A673 (cell line): ENCODE measurements at regions of chr2 and their contacts with region 1.

Region 1: GRCh38 chr2:54704688-54705605 is 18.5 kb upstream of the EML6 start:
- DNase-seq: peak; percentile 81
- H3K4me3 ChIP-seq: no peak overlapping the region
- H3K27ac ChIP-seq: no peak overlapping the region
- H3K4me1 ChIP-seq: no peaks in the 10 kb centered on the region
- H3K27me3 ChIP-seq: no peaks in the 10 kb centered on the region
- CTCF ChIP-seq: peak; percentile 74

Region 2: GRCh38 chr2:53422979-53423378 is 1282.0 kb before region 1 on chr2:
- CTCF ChIA-PET with region 1: no interaction called
- POLR2A ChIA-PET with region 1: no interaction called
- intact Hi-C with region 1: loop called (anchors 10 kb)
- DNase-seq: peak; percentile 73
- H3K4me3 ChIP-seq: no peak overlapping the region
- H3K27ac ChIP-seq: no peak overlapping the region
- H3K4me1 ChIP-seq: no peaks in the 10 kb centered on the region
- H3K27me3 ChIP-seq: peaks cover 6% of the 10 kb centered on the region
- CTCF ChIP-seq: peak; percentile 78

Region 3: DNA sequence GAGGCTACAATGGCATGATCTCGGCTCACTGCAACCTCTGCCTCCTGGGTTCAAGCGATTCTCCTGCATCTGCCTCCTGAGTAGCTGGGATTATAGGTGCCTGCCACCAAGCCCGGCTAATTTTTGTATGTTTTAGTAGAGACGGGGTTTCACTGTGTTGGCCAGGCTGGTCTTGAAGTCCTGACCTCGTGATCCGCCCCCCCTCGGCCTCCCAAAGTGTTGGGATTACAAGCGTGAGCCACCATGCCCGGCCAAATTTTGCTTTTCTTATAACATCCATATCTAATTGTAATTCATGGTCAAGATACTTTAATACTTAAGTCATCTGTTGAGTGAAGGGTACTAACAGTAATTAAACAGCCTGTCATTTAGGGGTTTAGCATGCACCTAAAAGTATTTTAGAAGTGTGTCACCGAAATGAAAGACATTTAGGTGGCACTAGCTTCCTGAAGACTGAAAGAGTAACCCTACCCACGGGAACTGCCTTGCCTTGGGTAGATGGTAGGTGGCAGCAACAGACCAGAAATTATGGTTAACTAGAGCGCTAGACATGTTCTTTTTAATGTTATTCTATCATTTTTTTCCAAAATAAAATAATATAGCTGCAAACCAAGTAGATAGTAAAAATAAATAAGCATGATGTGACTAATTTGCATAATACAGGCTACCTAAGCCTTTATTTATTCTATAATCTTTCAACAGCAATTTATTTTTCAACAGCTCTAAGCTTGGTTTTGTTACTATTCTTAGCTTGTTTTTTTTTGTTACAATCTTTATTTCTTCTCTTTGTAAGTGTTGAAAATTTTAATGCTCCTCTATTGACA is 598.1 kb before region 1 on chr2:
- CTCF ChIA-PET with region 1: interaction called, 30 read pairs
- POLR2A ChIA-PET with region 1: no interaction called
- intact Hi-C with region 1: loop called (anchors 1 kb)
- DNase-seq: peak; percentile 73
- H3K4me3 ChIP-seq: no peak overlapping the region
- H3K27ac ChIP-seq: no peak overlapping the region
- H3K4me1 ChIP-seq: no peaks in the 10 kb centered on the region
- H3K27me3 ChIP-seq: no peaks in the 10 kb centered on the region
- CTCF ChIP-seq: peak; percentile 79

Region 4: GRCh38 chr2:54176577-54176976 is 528.4 kb before region 1 on chr2:
- CTCF ChIA-PET with region 1: interaction called, 3 read pairs
- POLR2A ChIA-PET with region 1: no interaction called
- intact Hi-C with region 1: loop called (anchors 5 kb)
- DNase-seq: peak; percentile 50
- H3K4me3 ChIP-seq: no peak overlapping the region
- H3K27ac ChIP-seq: no peak overlapping the region
- H3K4me1 ChIP-seq: no peaks in the 10 kb centered on the region
- H3K27me3 ChIP-seq: no peaks in the 10 kb centered on the region
- CTCF ChIP-seq: peak; percentile 42; the same call in 1 of the 2 replicates

Region 5: DNA sequence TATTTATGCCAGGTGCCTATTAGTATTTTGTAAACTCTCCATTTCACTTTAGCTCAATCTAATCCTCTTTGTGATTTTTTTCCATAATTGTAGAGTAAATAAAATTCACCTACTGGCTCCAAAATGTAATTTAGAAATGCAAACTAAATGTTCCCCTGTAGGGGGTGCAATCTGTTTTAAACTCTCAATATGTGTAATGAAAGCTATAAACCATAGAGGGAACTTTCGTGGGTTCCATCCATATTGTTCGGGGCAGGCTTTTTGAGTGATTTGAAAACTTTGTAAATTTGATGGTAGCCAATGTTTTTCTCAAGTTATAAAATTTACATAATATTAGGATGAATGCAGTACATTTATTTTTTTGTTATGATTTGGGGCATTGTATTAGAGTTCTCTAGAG is 498.4 kb before region 1 on chr2:
- CTCF ChIA-PET with region 1: interaction called, 7 read pairs
- POLR2A ChIA-PET with region 1: no interaction called
- intact Hi-C with region 1: loop called (anchors 10 kb)
- DNase-seq: peak; percentile 76
- H3K4me3 ChIP-seq: no peak overlapping the region
- H3K27ac ChIP-seq: no peak overlapping the region
- H3K4me1 ChIP-seq: peaks cover 32% of the 10 kb centered on the region
- H3K27me3 ChIP-seq: no peaks in the 10 kb centered on the region
- CTCF ChIP-seq: peak; percentile 70

Region 6: GRCh38 chr2:54522624-54523281 is 182.2 kb before region 1 on chr2:
- CTCF ChIA-PET with region 1: interaction called, 19 read pairs
- POLR2A ChIA-PET with region 1: no interaction called
- intact Hi-C with region 1: loop called (anchors 1 kb)
- DNase-seq: peak; percentile 75
- H3K4me3 ChIP-seq: no peak overlapping the region
- H3K27ac ChIP-seq: no peak overlapping the region
- H3K4me1 ChIP-seq: peaks cover 22% of the 10 kb centered on the region
- H3K27me3 ChIP-seq: no peaks in the 10 kb centered on the region
- CTCF ChIP-seq: peak; percentile 70

Region 7: DNA sequence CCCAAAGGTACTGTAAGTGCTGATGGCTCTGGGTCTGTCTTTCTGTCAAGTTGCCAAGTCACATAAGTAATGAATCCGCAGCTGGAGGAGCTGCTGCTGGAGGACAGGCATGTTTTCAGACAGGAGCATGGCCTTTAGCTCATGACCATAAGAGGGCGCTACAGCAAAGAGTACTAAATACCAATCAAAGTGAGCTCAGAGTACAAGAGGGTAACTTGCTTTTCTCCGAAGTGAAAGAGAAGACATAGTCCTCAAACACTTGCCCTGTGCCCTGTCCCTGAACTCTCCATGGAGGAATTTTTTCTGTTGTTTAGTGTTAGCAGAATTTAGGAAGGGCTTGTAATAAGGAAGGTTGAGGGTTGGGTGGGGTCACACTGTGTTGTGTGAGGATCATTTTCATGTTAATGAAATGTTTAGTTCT is 39.5 kb before region 1 on chr2:
- CTCF ChIA-PET with region 1: interaction called, 12 read pairs
- POLR2A ChIA-PET with region 1: interaction called, 4 read pairs
- intact Hi-C with region 1: no loop called
- DNase-seq: peak; percentile 75
- H3K4me3 ChIP-seq: no peak overlapping the region
- H3K27ac ChIP-seq: peak overlapping the region; percentile 76
- H3K4me1 ChIP-seq: peaks cover 48% of the 10 kb centered on the region
- H3K27me3 ChIP-seq: no peaks in the 10 kb centered on the region
- CTCF ChIP-seq: peak; percentile 74

Region 8: DNA sequence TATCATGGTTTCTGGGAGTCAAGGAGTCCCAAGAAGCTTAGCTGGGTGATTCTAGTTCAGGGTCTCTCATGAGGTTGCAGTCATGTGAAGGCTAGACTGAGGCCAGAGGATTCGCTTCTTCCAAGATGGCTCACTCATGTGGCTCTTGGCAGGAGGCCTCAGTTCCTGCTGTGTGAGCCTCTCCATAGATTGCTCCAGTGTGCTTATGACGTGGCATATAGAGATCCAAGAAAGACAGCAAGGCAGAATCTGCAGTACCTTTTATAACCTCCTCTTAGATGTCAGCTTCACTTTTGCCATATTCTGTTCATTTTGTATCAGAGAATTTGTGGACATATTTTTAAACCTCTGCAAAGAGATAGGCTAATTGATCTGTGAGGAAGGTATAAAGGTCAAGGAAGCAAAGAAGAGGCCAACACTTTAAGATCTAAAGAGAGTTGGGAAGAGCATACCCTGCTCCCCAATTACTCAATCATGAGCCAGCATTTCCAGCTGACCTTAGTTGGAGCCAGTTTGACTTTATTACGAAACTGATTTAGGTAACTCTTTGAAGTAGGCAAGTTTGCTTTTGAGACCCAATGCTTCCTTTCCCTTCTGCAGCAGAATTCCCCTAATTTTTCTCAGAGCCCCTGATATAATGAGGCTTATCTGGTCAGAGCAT is 153.2 kb after region 1 on chr2:
- CTCF ChIA-PET with region 1: no interaction called
- POLR2A ChIA-PET with region 1: no interaction called
- intact Hi-C with region 1: no loop called
- DNase-seq: peak; percentile 65
- H3K4me3 ChIP-seq: no peak overlapping the region
- H3K27ac ChIP-seq: no peak overlapping the region
- H3K4me1 ChIP-seq: peaks cover 29% of the 10 kb centered on the region
- H3K27me3 ChIP-seq: no peaks in the 10 kb centered on the region
- CTCF ChIP-seq: no peak